ENCODE measurements at regions of chr9 and their contacts with region 1.

Region 1: DNA sequence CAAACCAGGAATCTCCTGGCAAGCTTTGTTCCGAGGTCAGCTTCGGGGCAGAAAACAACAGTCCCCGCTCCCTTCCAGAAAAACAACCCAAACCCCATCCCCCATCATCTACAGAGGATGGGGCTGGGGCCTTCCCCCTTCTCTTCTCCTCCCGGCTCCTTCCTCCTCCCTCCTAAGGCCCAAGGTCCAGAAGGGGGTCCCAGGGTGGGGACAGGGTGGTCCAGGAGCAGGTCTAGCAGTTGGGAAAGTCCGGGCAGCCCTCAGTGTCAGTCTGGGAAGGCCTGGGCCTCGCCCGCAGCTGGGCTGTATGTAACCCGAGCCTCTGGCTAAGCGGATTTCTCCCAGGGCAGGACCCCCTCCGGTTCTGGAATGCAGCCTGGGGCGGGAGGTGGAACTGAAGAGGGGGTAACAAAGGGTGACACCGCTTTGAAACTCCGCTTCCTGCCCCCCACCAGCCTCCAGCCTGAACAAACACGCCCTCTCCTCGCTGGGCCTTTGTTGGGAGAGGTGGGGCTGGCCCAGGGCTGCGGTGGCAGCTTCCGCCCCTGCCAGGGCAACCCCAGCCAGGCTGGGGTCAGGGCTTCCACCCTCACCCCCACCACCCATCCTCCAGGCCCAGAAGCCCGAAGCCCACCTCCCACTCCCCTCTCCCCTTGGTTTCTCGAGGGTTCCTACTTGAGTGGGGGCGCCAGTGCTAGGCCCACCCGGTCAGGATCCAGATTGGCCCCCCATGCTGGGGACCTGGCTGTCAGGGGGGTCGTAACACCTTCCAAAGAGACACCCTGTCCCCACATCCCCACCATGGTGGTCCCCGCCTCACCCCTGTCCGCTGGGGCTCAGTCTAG is 63.5 kb downstream of the C9orf50 start:
- DNase-seq: peak; percentile 97
- ATAC-seq: peak; percentile 82
- H3K4me3 ChIP-seq: peak overlapping the region; percentile 8 to 65 (median 44); a peak in 5 of 6 replicates
- H3K27ac ChIP-seq: peak overlapping the region; percentile 95
- H3K4me1 ChIP-seq: peaks cover 97% of the 10 kb centered on the region
- H3K27me3 ChIP-seq: no peaks in the 10 kb centered on the region
- CTCF ChIP-seq: 0 out of 2 replicates have a peak, but pooled peaks have one; percentile 5
- EP300 ChIP-seq: peak; percentile 78 to 98; a peak in 3 of 4 replicates
- POLR2A ChIP-seq: peak in 1 of 2 experiments; percentile 49; a peak in 2 of 4 replicates
- RAD21 ChIP-seq: peak; percentile 78

Region 2: DNA sequence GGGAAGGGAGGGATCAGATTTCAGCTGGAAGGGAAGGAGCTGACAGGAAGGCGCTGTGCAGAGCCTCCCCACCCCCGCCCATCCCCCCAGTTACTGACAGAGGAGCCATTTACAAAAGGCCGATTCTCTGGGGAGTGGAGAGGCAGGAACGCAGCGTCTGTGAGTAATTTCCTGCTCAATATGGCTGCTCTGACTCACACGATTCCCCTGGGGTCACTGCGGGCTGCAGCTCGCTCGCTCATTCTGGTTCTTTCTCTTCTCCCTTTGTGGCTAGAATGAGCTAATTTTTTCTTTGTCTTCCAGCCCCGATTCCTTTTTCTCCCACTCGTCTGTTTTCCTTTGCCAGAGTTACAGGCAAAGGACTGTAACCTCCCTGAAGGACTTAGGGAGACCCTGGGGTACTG is 417.4 kb before region 1 on chr9:
- CTCF ChIA-PET with region 1: no interaction called
- POLR2A ChIA-PET with region 1: interaction called, 23 read pairs
- in situ Hi-C with region 1: no loop called
- intact Hi-C with region 1: no loop called
- DNase-seq: peak; percentile 94
- ATAC-seq: peak; percentile 81
- H3K4me3 ChIP-seq: peak overlapping the region; percentile 57 to 75 (median 67)
- H3K27ac ChIP-seq: peak overlapping the region; percentile 98
- H3K4me1 ChIP-seq: peaks cover 51% of the 10 kb centered on the region
- H3K27me3 ChIP-seq: no peaks in the 10 kb centered on the region
- CTCF ChIP-seq: no peak
- EP300 ChIP-seq: peak in 1 of 2 experiments; percentile 63; a peak in 2 of 4 replicates
- POLR2A ChIP-seq: peak; percentile 75 to 78
- RAD21 ChIP-seq: no peak

Region 3: GRCh38 chr9:129333953-129334724 is 223.3 kb before region 1 on chr9:
- CTCF ChIA-PET with region 1: no interaction called
- POLR2A ChIA-PET with region 1: interaction called, 17 read pairs
- in situ Hi-C with region 1: no loop called
- intact Hi-C with region 1: no loop called
- DNase-seq: peak; percentile 94
- ATAC-seq: peak; percentile 93
- H3K4me3 ChIP-seq: peak overlapping the region in 2 of 3 experiments; percentile 30 to 65; a peak in 4 of 6 replicates
- H3K27ac ChIP-seq: peak overlapping the region; percentile 93
- H3K4me1 ChIP-seq: peaks cover 56% of the 10 kb centered on the region
- H3K27me3 ChIP-seq: no peaks in the 10 kb centered on the region
- CTCF ChIP-seq: peak; percentile 47; the same call in 1 of the 2 replicates
- EP300 ChIP-seq: peak in 1 of 2 experiments; percentile 84; a peak in 2 of 4 replicates
- POLR2A ChIP-seq: no peak
- RAD21 ChIP-seq: peak; percentile 75

Region 4: GRCh38 chr9:129487642-129488409 is 69.6 kb before region 1 on chr9:
- CTCF ChIA-PET with region 1: no interaction called
- POLR2A ChIA-PET with region 1: interaction called, 13 read pairs
- in situ Hi-C with region 1: no loop called
- intact Hi-C with region 1: no loop called
- DNase-seq: no peak
- ATAC-seq: peak; percentile 14
- H3K4me3 ChIP-seq: peak overlapping the region; percentile 68 to 86 (median 72); a peak in 5 of 6 replicates
- H3K27ac ChIP-seq: peak overlapping the region; percentile 91
- H3K4me1 ChIP-seq: peaks cover 87% of the 10 kb centered on the region
- H3K27me3 ChIP-seq: no peaks in the 10 kb centered on the region; a peak in 1 of 5 replicates
- CTCF ChIP-seq: no peak
- EP300 ChIP-seq: no peak
- POLR2A ChIP-seq: peak in 1 of 2 experiments; percentile 41; a peak in 1 of 4 replicates
- RAD21 ChIP-seq: no peak; the same call in 1 of the 2 replicates

Region 5: DNA sequence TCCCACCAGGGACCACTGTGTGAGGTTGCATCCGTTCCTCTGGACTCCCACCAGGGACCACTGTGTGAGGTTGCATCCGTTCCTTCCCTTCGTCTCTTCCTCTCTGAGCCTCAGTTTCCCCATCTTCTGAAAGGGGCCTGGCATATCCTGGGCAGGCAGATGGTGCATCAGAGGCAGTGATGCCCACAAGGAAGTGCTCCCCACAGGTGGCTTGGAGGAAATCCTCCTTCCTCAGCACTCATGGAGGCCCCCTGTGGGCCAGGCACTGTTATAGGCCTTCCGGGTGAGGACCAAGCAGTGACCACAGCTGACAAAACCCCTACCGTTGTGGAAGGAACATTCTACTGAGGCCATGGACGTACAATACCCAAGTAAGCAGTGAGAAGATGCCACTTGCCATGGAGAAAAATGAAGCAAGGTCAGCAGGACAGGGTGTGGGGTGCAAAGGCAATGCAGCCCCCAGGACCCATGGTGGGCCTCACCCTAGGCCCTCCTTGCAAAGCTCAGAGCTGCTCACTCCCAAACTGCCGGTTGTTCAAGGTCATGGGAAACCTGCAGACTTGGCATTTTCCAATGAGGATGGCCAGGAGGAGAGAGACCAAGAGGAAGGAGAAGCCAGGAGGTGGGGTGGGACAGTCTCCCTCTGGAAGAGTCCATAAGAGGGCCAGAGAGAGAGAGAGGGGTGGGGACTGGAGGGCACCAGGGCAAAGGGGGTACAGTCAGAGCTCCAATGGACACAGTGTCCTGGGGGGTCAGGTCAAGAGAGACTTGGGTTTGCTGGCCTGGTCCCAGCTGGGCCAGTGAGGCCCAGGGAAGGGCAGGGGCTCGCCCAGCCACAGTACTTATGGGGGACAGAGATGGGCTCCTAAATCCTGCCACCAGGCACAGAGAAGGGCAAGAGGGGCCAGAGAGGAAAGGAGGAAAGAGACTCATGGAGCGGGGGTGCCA is 12.4 kb after region 1 on chr9:
- CTCF ChIA-PET with region 1: no interaction called
- POLR2A ChIA-PET with region 1: interaction called, 136 read pairs
- in situ Hi-C with region 1: no loop called
- intact Hi-C with region 1: no loop called
- DNase-seq: peak; percentile 56
- ATAC-seq: peak; percentile 42
- H3K4me3 ChIP-seq: peak overlapping the region; percentile 38 to 61 (median 50)
- H3K27ac ChIP-seq: peak overlapping the region; percentile 80
- H3K4me1 ChIP-seq: peaks cover 70% of the 10 kb centered on the region
- H3K27me3 ChIP-seq: no peaks in the 10 kb centered on the region; a peak in 1 of 5 replicates
- CTCF ChIP-seq: peak; percentile 75
- EP300 ChIP-seq: no peak
- POLR2A ChIP-seq: no peak
- RAD21 ChIP-seq: peak; percentile 73

Region 6: DNA sequence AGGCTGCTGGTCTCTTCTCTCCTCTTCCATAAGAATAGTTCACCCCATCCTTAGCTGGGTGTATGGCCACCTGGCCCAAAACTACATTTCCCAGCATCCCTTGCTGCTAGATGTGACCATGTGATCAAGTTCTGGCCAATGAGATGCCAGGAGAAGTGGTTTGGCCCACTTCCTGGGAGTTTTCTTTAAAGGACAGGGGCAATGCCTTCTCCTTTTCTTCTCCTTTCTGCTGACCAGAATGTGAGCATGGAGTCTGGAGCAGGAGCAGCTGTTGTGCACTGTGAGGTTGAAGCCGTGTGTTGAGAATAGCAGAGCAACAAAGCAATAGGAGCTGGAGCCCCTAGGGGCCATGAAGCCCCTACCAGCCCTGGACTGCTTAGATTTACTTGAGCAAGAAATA is 26.7 kb after region 1 on chr9:
- CTCF ChIA-PET with region 1: no interaction called
- POLR2A ChIA-PET with region 1: interaction called, 26 read pairs
- in situ Hi-C with region 1: no loop called
- intact Hi-C with region 1: no loop called
- DNase-seq: peak; percentile 82
- ATAC-seq: peak; percentile 74
- H3K4me3 ChIP-seq: no peak overlapping the region
- H3K27ac ChIP-seq: peak overlapping the region; percentile 45
- H3K4me1 ChIP-seq: peaks cover 70% of the 10 kb centered on the region
- H3K27me3 ChIP-seq: no peaks in the 10 kb centered on the region
- CTCF ChIP-seq: no peak
- EP300 ChIP-seq: no peak
- POLR2A ChIP-seq: no peak
- RAD21 ChIP-seq: no peak

Region 7: DNA sequence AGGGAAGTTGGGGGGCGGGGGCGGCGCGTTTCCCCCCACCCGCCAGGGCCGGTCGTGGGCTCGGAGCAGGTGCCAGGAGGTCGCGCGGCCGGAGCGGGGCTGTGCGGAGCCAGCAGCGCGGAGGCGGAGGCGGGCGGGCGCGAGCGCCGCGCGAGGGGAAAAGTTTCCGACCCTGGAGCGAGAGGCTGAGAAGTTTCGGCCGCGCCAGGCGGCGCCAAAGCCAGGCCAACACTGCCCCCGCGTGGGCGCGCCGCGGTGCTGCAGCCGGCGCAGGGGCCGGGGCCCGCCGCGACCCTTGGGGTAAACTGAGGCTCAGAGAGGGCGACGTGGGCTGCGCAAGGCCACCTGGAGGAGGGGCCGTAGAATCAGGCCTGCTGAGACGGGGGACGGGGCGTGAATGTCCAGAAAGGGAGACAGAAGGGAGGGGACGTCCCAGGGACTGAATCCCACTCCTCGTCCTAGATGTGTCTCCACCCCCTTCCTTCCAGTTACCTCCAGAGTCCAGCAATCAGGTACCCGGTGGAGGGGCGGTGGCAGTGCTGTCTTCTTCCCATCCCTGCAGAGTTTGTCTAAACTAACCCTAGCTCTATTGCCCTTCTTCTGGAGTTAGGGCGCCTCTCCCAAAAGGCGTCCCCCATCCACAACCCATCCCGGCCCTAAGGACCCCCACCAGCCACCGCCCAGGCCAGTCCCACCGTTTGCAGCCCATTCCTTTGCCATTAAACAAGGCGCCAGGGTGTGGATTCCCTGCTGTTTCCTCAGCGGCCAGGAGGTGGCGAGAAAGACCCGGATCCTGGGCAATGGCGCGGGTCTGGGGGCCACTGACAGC is 53.3 kb after region 1 on chr9:
- CTCF ChIA-PET with region 1: no interaction called
- POLR2A ChIA-PET with region 1: interaction called, 18 read pairs
- in situ Hi-C with region 1: no loop called
- intact Hi-C with region 1: no loop called
- DNase-seq: peak; percentile 48
- ATAC-seq: peak; percentile 57
- H3K4me3 ChIP-seq: peak overlapping the region; percentile 69 to 87 (median 81)
- H3K27ac ChIP-seq: peak overlapping the region; percentile 58
- H3K4me1 ChIP-seq: peaks cover 62% of the 10 kb centered on the region
- H3K27me3 ChIP-seq: no peaks in the 10 kb centered on the region
- CTCF ChIP-seq: peak; percentile 81
- EP300 ChIP-seq: no peak
- POLR2A ChIP-seq: no peak
- RAD21 ChIP-seq: peak; percentile 100

Region 8: DNA sequence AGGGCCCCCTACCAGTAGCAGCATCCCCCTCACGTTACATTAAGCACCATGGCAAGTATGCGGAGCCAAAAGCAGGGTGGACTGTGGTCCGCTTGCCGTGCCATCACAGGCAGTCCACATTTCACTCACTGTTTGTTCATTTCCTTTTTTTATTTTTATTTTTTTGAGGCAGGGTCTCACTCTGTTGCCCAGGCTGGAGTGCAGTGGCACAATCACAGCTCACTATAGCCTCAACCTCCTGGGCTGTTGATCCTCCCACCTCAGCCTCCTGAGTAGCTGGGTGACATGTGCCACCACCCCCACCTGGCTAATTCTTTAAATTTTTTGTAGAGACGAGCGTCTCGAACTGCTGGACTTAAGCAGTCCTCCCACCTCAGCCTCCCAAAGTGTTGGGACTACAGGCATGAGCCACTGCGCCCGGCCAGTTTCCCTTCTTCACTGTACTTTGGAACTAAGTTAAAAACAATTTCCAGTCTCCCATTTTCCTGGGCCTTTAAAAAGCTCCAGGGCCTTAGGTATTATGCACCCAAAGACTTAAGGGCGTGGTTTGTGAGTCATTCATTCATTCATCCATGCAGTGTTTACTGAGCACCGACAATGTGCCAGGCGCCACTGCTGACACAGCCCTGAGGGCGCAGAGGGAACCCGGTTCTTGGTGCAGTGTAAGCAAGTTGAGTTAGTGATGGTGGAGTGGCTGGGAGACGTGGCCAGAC is 128.0 kb after region 1 on chr9:
- CTCF ChIA-PET with region 1: no interaction called
- POLR2A ChIA-PET with region 1: no interaction called
- in situ Hi-C with region 1: no loop called
- intact Hi-C with region 1: no loop called
- DNase-seq: no peak
- ATAC-seq: no peak
- H3K4me3 ChIP-seq: no peak overlapping the region
- H3K27ac ChIP-seq: no peak overlapping the region
- H3K4me1 ChIP-seq: no peaks in the 10 kb centered on the region
- H3K27me3 ChIP-seq: peaks cover 0 to 32% of the 10 kb centered on the region in 2 experiments; a peak in 4 of 5 replicates
- CTCF ChIP-seq: no peak
- EP300 ChIP-seq: no peak
- POLR2A ChIP-seq: no peak
- RAD21 ChIP-seq: no peak

Region 9: DNA sequence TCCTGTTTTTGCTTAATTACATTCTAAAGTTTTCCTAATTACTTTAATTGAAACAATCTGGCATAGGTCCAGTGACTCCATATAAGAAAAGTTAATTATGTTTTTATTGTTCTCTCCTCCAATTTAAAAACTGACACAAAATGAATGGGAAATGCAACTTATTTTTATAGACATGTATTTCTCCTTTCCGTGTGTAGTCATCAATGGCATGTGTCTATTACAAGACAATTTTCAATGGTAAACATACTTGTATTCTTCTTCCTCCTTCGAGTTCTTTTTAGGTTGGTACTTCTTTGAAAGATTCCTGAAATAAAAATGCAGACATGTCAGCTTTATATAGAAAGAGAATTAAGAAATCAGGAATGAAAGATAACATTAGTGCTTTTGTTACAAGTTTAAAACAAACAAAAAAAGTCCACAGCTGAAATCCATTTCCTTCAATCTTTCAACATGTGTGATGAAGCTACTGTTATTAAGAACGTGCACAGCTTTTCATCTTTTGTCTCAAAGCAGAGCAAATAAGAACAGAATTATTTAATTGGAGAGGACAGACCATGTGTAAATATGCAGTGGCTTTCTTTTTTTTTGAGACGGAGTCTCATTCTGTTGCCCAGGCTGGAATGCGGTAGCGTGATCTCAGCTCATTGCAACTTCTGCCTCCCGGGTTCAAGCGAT is 421.8 kb after region 1 on chr9:
- CTCF ChIA-PET with region 1: no interaction called
- POLR2A ChIA-PET with region 1: no interaction called
- in situ Hi-C with region 1: no loop called
- intact Hi-C with region 1: no loop called
- DNase-seq: no peak
- ATAC-seq: no peak
- H3K4me3 ChIP-seq: no peak overlapping the region
- H3K27ac ChIP-seq: no peak overlapping the region
- H3K4me1 ChIP-seq: peaks cover 9% of the 10 kb centered on the region; the same call in 1 of the 2 replicates
- H3K27me3 ChIP-seq: no peaks in the 10 kb centered on the region
- CTCF ChIP-seq: no peak
- EP300 ChIP-seq: no peak
- POLR2A ChIP-seq: no peak
- RAD21 ChIP-seq: no peak